SK-N-SH (cell line): ENCODE measurements at regions of chr19 and their contacts with region 1.

Region 1: GRCh38 chr19:49850473-49851342 is at the start of gene PTOV1:
- DNase-seq: peak; percentile 98
- H3K4me3 ChIP-seq: peak within 1 kb of the TSS; percentile 77 to 89
- H3K27ac ChIP-seq: peak within 1 kb of the TSS; percentile 97 to 99
- H3K4me1 ChIP-seq: peaks cover 15 to 32% of the 10 kb centered on the region in 2 experiments; a peak in 3 of 4 replicates
- H3K27me3 ChIP-seq: no peaks in the 10 kb centered on the region
- CTCF ChIP-seq: no peak
- EP300 ChIP-seq: peak in 1 of 2 experiments; percentile 55; a peak in 1 of 4 replicates
- RAD21 ChIP-seq: no peak
- polyA plus RNA-seq, gene PTOV1: 56.1 and 95.0 TPM in 2 replicates

Region 2: DNA sequence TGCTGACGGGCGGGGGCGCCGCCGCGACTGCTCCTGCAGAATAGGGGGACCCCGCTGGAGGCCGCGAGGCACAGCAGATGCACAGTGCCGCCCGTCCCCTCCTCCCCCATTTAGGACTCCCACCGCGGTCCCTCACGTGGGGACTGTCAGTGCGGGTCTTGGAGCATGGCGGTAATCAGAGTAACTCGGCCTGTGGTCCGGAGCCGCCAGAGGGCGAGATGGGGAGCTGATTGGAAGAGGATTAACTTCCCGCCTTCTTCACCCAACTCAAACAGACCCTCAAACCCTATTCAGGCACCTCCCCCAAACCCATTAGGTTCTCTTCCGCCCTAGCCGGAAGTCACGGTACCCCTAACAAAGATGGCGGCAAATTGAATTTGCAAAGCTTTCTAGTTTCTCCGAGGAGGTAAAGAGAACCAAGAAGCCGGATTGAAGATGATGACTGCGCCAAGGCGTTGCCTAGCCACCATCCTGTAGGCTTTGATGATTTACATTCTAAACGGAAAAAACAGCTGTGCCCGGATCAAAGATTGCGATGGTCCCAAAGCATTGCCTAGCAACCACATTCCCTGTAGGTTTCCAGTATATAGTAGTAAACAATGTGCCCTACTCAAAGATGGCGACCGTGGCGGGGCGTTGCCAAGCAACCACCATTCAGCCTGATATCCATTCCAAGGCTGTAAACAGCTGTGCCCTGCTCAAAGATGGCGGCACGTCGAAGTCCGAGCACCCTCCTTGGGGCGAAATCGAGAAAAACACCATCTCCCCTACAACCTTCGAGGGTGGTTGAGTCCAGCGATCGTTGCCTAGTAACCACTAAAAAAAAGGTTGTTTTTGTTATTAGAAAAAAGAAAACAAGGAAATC is 37.5 kb before region 1 on chr19 and contains the start of gene FUZ:
- CTCF ChIA-PET with region 1: interaction called, 8 read pairs
- POLR2A ChIA-PET with region 1: interaction called, 15 read pairs
- DNase-seq: peak; percentile 91
- H3K4me3 ChIP-seq: peak within 1 kb of the TSS; percentile 65 to 76
- H3K27ac ChIP-seq: peak within 1 kb of the TSS; percentile 95 to 96
- H3K4me1 ChIP-seq: peaks cover 12 to 21% of the 10 kb centered on the region in 2 experiments
- H3K27me3 ChIP-seq: no peaks in the 10 kb centered on the region
- CTCF ChIP-seq: peak; percentile 38; the same call in 1 of the 2 replicates
- EP300 ChIP-seq: no peak
- RAD21 ChIP-seq: peak; percentile 33
- polyA plus RNA-seq, gene FUZ: 23.7 and 29.9 TPM in 2 replicates

Region 3: GRCh38 chr19:49862376-49863253 is 11.9 kb after region 1 on chr19:
- CTCF ChIA-PET with region 1: interaction called, 20 read pairs
- POLR2A ChIA-PET with region 1: interaction called, 25 read pairs
- DNase-seq: peak; percentile 77
- H3K4me3 ChIP-seq: no peak overlapping the region
- H3K27ac ChIP-seq: no peak overlapping the region; a peak in 1 of 4 replicates
- H3K4me1 ChIP-seq: peaks cover 22 to 23% of the 10 kb centered on the region in 2 experiments; a peak in 3 of 4 replicates
- H3K27me3 ChIP-seq: no peaks in the 10 kb centered on the region
- CTCF ChIP-seq: peak; percentile 50
- EP300 ChIP-seq: no peak
- RAD21 ChIP-seq: no peak

Region 4: DNA sequence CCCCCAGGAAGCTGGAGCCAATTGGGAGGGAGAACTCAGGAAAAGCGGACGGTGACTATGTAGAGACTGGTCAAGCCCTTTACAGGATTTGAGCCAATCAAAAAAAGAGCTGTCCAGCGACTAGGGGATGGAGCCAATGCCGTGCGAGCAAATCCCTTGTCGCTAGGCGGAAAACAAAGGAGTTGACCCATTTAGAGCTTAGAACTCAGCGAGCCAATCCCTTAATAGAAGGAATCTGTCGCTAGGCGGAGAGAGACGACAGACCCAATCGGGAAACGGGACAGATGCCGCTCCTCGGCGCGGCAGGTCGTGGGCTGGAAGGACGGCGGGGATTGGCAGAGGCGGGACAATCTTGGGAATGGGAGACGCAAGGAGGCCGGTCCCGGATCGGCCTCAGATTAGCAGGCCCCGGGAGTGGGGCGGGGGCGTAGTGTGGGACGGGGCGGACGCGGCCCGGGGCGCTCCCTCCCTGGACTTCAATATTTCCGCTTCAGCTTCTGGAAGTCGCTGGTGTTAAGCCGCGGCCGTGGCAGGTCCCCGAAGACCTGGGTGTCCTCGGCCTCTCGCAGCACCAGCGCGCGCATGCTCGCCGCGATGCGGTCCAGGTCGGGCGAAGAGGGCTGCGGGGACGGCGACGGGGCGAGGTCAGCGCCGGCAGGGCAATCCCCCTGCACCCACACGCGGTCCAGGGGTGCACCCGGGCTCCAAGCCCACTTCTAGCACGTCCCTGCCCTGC is 18.9 kb after region 1 on chr19:
- CTCF ChIA-PET with region 1: interaction called, 20 read pairs
- POLR2A ChIA-PET with region 1: interaction called, 25 read pairs
- DNase-seq: peak; percentile 90
- H3K4me3 ChIP-seq: peak overlapping the region; percentile 53 to 63
- H3K27ac ChIP-seq: peak overlapping the region; percentile 96 to 98
- H3K4me1 ChIP-seq: peaks cover 33 to 45% of the 10 kb centered on the region in 2 experiments; a peak in 3 of 4 replicates
- H3K27me3 ChIP-seq: no peaks in the 10 kb centered on the region
- CTCF ChIP-seq: no peak
- EP300 ChIP-seq: peak; percentile 53 to 98; a peak in 3 of 4 replicates
- RAD21 ChIP-seq: no peak

Region 5: DNA sequence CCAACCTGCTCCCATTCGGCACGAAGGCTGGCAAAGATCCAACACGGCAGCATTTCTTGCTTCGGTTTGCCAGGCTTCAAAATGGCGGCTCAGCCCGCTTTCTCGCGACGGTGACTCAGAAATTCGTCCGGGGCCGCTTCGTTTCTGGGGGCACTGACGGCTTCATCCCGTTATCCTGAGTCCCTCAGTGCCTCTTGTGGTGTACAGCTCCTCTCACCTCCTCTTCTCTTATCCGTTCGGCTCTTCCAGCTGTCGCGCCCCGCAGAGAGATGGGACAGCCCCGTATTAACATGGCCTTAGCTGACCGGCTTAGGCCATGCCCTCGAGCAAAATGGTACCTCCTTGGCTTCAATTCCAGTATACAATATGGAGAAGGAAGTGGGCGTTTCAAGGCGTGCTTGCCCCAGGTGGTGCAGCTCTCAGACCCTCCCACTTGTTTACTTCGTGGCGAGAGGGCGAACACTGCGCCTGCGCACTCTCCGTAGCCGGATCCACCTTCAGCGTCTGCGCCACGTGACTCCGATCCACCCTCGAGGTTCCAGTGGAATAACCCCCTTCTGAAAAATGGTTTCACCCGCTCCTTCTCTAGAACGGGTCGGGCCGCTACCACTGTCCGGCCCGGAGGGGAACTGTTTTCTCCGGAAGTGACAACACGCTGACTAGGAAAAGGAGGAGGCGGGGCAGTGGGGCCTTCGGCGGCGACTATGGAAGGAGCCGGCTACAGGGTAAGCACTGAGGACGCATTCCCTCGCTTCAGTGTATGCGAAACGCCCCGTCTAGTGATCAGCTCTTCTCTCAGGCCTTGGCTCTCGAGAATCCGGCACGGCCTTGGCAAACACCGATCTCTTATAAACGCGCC is 26.5 kb after region 1 on chr19 and contains the starts of genes AKT1S1 and TBC1D17:
- CTCF ChIA-PET with region 1: no interaction called
- POLR2A ChIA-PET with region 1: interaction called, 19 read pairs
- DNase-seq: peak; percentile 91
- H3K4me3 ChIP-seq: peak within 1 kb of the TSS; percentile 98 to 99
- H3K27ac ChIP-seq: peak within 1 kb of the TSS; percentile 96 to 99
- H3K4me1 ChIP-seq: peaks cover 7 to 23% of the 10 kb centered on the region in 2 experiments; a peak in 3 of 4 replicates
- H3K27me3 ChIP-seq: no peaks in the 10 kb centered on the region
- CTCF ChIP-seq: no peak
- EP300 ChIP-seq: no peak
- RAD21 ChIP-seq: no peak
- polyA plus RNA-seq, gene AKT1S1: 56.7 and 63.7 TPM in 2 replicates
- polyA plus RNA-seq, gene TBC1D17: 27.3 and 28.3 TPM in 2 replicates

Region 6: GRCh38 chr19:49954079-49954829 is 103.5 kb after region 1 on chr19:
- CTCF ChIA-PET with region 1: no interaction called
- POLR2A ChIA-PET with region 1: no interaction called
- DNase-seq: no peak
- H3K4me3 ChIP-seq: no peak overlapping the region
- H3K27ac ChIP-seq: no peak overlapping the region
- H3K4me1 ChIP-seq: no peaks in the 10 kb centered on the region
- H3K27me3 ChIP-seq: peaks cover 67% of the 10 kb centered on the region
- CTCF ChIP-seq: no peak
- EP300 ChIP-seq: no peak
- RAD21 ChIP-seq: no peak